GM12878 (cell line): ENCODE measurements at regions of chr6 and their contacts with region 1.

Region 1: DNA sequence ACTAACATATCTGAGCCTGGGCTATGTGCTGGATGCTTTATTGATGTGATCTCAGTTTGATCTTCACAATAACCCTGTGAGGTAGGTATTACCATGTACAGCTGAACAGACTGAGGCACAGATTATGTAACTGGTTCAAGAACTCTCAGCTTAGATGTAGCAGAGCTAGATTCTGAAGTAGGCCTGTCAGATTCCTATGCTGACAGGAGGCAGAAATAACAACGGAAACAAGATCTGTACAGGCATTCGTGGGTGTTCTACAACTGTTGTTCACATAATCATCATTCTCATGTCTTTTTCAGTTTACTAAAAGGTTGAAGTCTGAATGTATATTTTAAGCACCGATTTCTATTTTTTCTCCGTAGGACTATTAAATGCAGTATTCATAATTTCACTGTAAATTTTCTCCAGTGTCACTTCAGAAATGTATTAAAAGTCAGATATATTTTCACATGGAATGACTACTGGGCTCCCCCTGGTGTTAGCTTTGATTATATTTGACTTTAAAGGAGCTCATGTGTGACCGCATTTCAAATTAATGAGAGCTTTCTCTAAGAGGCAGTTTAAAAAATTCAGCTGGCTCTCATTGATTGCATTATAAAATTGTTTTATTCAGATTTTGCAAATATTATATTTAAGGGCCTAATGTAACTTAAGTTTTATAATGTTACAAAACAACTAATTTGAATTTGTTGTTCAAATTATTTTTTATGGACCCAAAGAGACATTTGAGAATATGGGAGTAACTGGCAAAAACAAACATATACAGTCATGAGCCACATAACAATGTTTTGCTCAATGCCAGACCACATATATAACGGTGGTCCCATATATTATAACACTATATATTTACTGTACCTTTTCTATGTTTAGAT is 36.4 kb upstream of the SLC17A4 start:
- DNase-seq: no peak
- ATAC-seq: 0 out of 3 replicates have a peak, but pooled peaks have one; percentile 34
- H3K4me3 ChIP-seq: no peak overlapping the region
- H3K27ac ChIP-seq: no peak overlapping the region
- H3K4me1 ChIP-seq: no peaks in the 10 kb centered on the region
- H3K27me3 ChIP-seq: peaks cover 0 to 3% of the 10 kb centered on the region in 2 experiments; a peak in 1 of 4 replicates
- CTCF ChIP-seq: peak; percentile 42 to 48 (median 47)
- EP300 ChIP-seq: no peak
- POLR2A ChIP-seq: no peak
- RAD21 ChIP-seq: 0 out of 2 replicates have a peak, but pooled peaks have one; percentile 32

Region 2: DNA sequence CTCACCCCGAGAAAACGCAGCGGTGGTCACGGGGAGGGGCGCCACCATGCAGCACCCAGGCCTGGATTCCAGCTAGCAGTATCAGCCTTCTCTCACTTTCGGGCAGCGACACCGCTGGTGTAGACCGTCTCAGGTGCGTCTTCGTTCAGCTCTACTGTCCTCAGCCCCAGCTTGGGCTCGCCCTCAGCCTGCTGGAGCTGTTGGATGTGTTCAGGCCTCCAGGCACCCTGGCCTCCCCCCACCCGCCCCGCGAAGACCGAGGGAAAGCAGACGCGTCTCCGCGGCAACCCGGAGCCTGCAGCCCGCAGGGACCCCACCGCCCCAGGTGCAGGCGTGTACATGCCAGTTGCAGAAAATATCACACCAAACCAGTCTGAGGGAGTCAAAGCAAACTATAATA is 499.8 kb before region 1 on chr6:
- CTCF ChIA-PET with region 1: interaction called, 58 read pairs
- POLR2A ChIA-PET with region 1: no interaction called
- RAD21 ChIA-PET with region 1: interaction called, 28 read pairs
- SMC1A ChIA-PET with region 1: interaction called, 12 read pairs
- in situ Hi-C with region 1: loop called (anchors 10 kb)
- intact Hi-C with region 1: loop called (anchors 2 kb)
- DNase-seq: no peak
- ATAC-seq: no peak
- H3K4me3 ChIP-seq: no peak overlapping the region
- H3K27ac ChIP-seq: no peak overlapping the region
- H3K4me1 ChIP-seq: no peaks in the 10 kb centered on the region
- H3K27me3 ChIP-seq: no peaks in the 10 kb centered on the region
- CTCF ChIP-seq: no peak
- EP300 ChIP-seq: no peak
- POLR2A ChIP-seq: no peak
- RAD21 ChIP-seq: no peak

Region 3: DNA sequence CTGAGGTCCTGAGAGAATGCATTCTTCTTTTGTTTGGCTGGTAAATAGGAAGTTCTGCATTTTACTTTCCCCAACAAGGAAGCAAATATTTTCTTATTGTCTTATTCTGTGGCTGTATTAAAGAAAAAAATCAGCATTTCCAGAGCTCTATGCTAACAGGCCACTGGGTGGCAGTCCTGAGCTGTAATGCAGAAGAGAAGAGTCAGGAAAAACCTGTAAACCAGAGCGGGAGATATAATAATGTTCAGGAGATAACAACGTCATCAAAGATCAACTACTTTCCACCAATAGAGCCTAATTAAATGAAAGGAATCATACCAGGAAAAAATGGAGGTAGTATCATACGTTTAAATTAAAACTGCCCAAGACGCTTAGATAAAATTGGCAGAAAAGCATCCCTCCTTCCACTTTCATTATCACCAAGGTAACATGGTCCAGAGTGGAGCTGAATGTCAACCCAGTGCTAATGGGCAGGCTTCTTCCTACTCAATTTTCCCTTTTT is 494.6 kb before region 1 on chr6:
- CTCF ChIA-PET with region 1: interaction called, 58 read pairs
- POLR2A ChIA-PET with region 1: no interaction called
- RAD21 ChIA-PET with region 1: interaction called, 28 read pairs
- SMC1A ChIA-PET with region 1: interaction called, 12 read pairs
- in situ Hi-C with region 1: loop called (anchors 10 kb)
- intact Hi-C with region 1: loop called (anchors 2 kb)
- DNase-seq: peak; percentile 19
- ATAC-seq: peak; percentile 81
- H3K4me3 ChIP-seq: no peak overlapping the region; the same call in 1 of the 2 replicates
- H3K27ac ChIP-seq: no peak overlapping the region
- H3K4me1 ChIP-seq: no peaks in the 10 kb centered on the region
- H3K27me3 ChIP-seq: no peaks in the 10 kb centered on the region; a peak in 1 of 4 replicates
- CTCF ChIP-seq: peak; percentile 82 to 90 (median 84)
- EP300 ChIP-seq: 0 out of 4 replicates have a peak, but pooled peaks of 1 of the 2 experiments have one; percentile 11
- POLR2A ChIP-seq: no peak
- RAD21 ChIP-seq: peak; percentile 91

Region 4: GRCh38 chr6:25703005-25703404 is 15.1 kb before region 1 on chr6:
- CTCF ChIA-PET with region 1: interaction called, 24 read pairs
- POLR2A ChIA-PET with region 1: no interaction called
- RAD21 ChIA-PET with region 1: no interaction called
- SMC1A ChIA-PET with region 1: interaction called, 6 read pairs
- in situ Hi-C with region 1: no loop called
- intact Hi-C with region 1: no loop called
- DNase-seq: no peak
- ATAC-seq: no peak
- H3K4me3 ChIP-seq: no peak overlapping the region
- H3K27ac ChIP-seq: no peak overlapping the region
- H3K4me1 ChIP-seq: no peaks in the 10 kb centered on the region
- H3K27me3 ChIP-seq: no peaks in the 10 kb centered on the region; a peak in 1 of 4 replicates
- CTCF ChIP-seq: no peak
- EP300 ChIP-seq: no peak
- POLR2A ChIP-seq: no peak
- RAD21 ChIP-seq: no peak

Region 5: DNA sequence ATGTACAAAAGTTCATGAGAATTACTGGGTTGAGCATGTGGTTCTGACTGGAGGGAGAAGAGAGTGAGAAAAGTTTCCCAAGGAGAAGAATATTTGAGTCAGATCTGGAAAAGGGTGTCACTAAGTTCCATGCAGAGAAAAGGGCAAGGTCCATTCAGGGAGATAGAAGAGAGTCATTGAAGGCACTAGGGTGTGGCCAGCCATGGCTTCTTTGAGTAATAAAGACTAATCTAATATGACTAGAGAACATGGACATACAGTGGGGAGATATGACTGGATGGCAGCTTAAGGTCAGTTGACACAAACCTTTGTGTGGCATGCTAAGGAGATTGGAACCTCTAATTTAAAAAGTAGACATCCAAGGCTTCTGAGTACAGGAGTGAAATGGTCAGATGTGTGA is 25.8 kb after region 1 on chr6:
- CTCF ChIA-PET with region 1: interaction called, 11 read pairs
- POLR2A ChIA-PET with region 1: no interaction called
- RAD21 ChIA-PET with region 1: no interaction called
- SMC1A ChIA-PET with region 1: interaction called, 3 read pairs
- in situ Hi-C with region 1: no loop called
- intact Hi-C with region 1: no loop called
- DNase-seq: no peak
- ATAC-seq: peak; percentile 50
- H3K4me3 ChIP-seq: no peak overlapping the region
- H3K27ac ChIP-seq: no peak overlapping the region
- H3K4me1 ChIP-seq: no peaks in the 10 kb centered on the region
- H3K27me3 ChIP-seq: no peaks in the 10 kb centered on the region
- CTCF ChIP-seq: no peak
- EP300 ChIP-seq: no peak
- POLR2A ChIP-seq: no peak
- RAD21 ChIP-seq: no peak

Region 6: GRCh38 chr6:25942561-25943147 is 224.6 kb after region 1 on chr6:
- CTCF ChIA-PET with region 1: interaction called, 29 read pairs
- POLR2A ChIA-PET with region 1: no interaction called
- RAD21 ChIA-PET with region 1: interaction called, 4 read pairs
- SMC1A ChIA-PET with region 1: interaction called, 10 read pairs
- in situ Hi-C with region 1: no loop called
- intact Hi-C with region 1: loop called (anchors 1 kb)
- DNase-seq: no peak
- ATAC-seq: peak; percentile 82
- H3K4me3 ChIP-seq: no peak overlapping the region
- H3K27ac ChIP-seq: no peak overlapping the region
- H3K4me1 ChIP-seq: no peaks in the 10 kb centered on the region
- H3K27me3 ChIP-seq: no peaks in the 10 kb centered on the region
- CTCF ChIP-seq: peak; percentile 53 to 82 (median 62); a peak in 5 of 6 replicates
- EP300 ChIP-seq: no peak
- POLR2A ChIP-seq: no peak
- RAD21 ChIP-seq: peak; percentile 86

Region 7: GRCh38 chr6:25997921-25998320 is 279.8 kb after region 1 on chr6:
- CTCF ChIA-PET with region 1: interaction called, 85 read pairs
- POLR2A ChIA-PET with region 1: no interaction called
- RAD21 ChIA-PET with region 1: interaction called, 10 read pairs
- SMC1A ChIA-PET with region 1: interaction called, 28 read pairs
- in situ Hi-C with region 1: no loop called
- intact Hi-C with region 1: loop called (anchors 2 kb)
- DNase-seq: no peak
- ATAC-seq: no peak
- H3K4me3 ChIP-seq: no peak overlapping the region
- H3K27ac ChIP-seq: no peak overlapping the region
- H3K4me1 ChIP-seq: peaks cover 4% of the 10 kb centered on the region
- H3K27me3 ChIP-seq: no peaks in the 10 kb centered on the region
- CTCF ChIP-seq: no peak
- EP300 ChIP-seq: no peak
- POLR2A ChIP-seq: no peak
- RAD21 ChIP-seq: no peak